ENCODE measurements at regions of chr1 and their contacts with region 1.

Region 1: DNA sequence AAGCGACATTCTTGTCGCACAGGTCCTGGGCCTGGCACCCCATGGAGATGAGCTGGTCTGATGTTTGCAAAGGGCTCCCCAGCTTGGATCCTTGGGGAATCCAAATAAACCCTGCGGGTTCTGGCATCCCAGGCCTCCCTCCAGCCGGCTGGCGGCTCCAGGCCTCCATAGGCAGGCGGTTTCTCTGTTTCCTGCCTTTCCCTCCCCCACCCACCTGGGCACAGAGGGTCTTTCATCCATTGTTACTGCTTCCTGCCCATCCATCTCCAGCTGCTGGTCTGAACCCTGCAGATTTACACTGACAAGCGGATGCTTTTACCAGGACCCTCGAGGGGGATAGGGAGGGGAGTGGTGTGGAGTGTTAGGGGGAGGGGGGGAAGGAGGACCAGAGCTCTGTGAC is 39.1 kb upstream of the ID3 start:
- DNase-seq: no peak
- ATAC-seq: no peak
- H3K4me3 ChIP-seq: peak overlapping the region in 1 of 2 experiments; percentile 1
- H3K4me3 Mint-ChIP-seq: no peak overlapping the region
- H3K27ac ChIP-seq: peak overlapping the region in 1 of 2 experiments; percentile 53
- H3K27ac Mint-ChIP-seq: no peak overlapping the region
- H3K4me1 ChIP-seq: peaks cover 94% of the 10 kb centered on the region
- H3K4me1 Mint-ChIP-seq: peaks cover 93% of the 10 kb centered on the region
- H3K27me3 ChIP-seq: no peaks in the 10 kb centered on the region
- H3K27me3 Mint-ChIP-seq: no peaks in the 10 kb centered on the region
- CTCF ChIP-seq: no peak

Region 2: GRCh38 chr1:23577056-23578004 is 21.1 kb before region 1 on chr1:
- CTCF ChIA-PET with region 1: interaction called, 7 read pairs
- POLR2A ChIA-PET with region 1: interaction called, 20 read pairs
- intact Hi-C with region 1: loop called in 1 of 2 experiments (anchors 2 kb)
- DNase-seq: no peak
- ATAC-seq: peak; percentile 74
- H3K4me3 ChIP-seq: no peak overlapping the region
- H3K4me3 Mint-ChIP-seq: peak overlapping the region; percentile 50
- H3K27ac ChIP-seq: peak overlapping the region; percentile 7 to 10
- H3K27ac Mint-ChIP-seq: peak overlapping the region; percentile 87
- H3K4me1 ChIP-seq: peaks cover 60% of the 10 kb centered on the region
- H3K4me1 Mint-ChIP-seq: peaks cover 62% of the 10 kb centered on the region
- H3K27me3 ChIP-seq: no peaks in the 10 kb centered on the region
- H3K27me3 Mint-ChIP-seq: no peaks in the 10 kb centered on the region
- CTCF ChIP-seq: no peak

Region 3: DNA sequence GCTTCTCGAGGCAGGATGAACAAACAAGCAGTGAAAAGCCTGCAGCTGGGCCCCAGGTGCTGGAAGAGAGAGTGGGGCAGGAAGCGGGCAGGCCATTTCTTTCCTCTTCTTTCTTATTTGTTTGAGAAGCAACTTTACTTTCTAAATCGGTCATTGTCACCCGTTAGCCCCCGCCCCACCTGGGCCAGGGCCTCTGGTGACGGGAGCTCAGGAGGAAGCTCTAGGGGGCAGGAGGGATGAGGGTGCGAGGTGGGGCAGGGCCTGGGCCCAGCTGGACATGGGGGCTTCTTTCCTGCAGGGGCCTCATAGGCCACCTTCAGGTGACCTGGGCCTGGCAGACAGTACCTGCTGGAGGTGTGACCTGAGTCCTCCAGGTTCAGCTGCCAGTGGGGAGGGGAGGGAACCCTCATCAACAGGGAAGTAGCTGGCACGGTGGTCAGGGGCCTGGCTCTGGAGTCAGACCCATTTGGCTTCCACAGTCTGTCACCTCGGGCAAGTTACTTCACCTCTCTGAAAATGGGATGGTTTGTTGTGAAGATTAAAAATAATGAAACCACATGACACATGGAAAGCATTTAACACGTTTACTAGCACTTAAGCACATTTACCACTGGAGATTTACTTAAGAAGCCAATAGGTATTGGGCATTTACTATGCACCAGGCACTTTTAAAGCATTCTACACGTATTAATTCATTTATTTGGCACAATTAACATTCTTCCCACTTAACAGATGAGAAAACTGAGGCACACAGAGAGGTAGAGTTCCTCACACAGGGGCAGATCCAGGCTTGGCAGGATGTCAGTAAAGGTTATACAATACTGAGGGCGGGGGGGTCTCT is 15.0 kb after region 1 on chr1:
- CTCF ChIA-PET with region 1: interaction called, 17 read pairs
- POLR2A ChIA-PET with region 1: interaction called, 86 read pairs
- intact Hi-C with region 1: loop called (anchors 1 to 2 kb)
- DNase-seq: peak in 7 of 9 experiments; percentile 33 to 78 (median 61)
- ATAC-seq: peak; percentile 61
- H3K4me3 ChIP-seq: peak overlapping the region in 1 of 2 experiments; percentile 8
- H3K4me3 Mint-ChIP-seq: peak overlapping the region; percentile 54
- H3K27ac ChIP-seq: peak overlapping the region; percentile 40 to 72
- H3K27ac Mint-ChIP-seq: peak overlapping the region; percentile 90
- H3K4me1 ChIP-seq: peaks cover 65% of the 10 kb centered on the region
- H3K4me1 Mint-ChIP-seq: peaks cover 83% of the 10 kb centered on the region
- H3K27me3 ChIP-seq: no peaks in the 10 kb centered on the region
- H3K27me3 Mint-ChIP-seq: no peaks in the 10 kb centered on the region
- CTCF ChIP-seq: no peak

Region 4: GRCh38 chr1:23619299-23620188 is 21.1 kb after region 1 on chr1:
- CTCF ChIA-PET with region 1: interaction called, 5 read pairs
- POLR2A ChIA-PET with region 1: interaction called, 86 read pairs
- intact Hi-C with region 1: loop called (anchors 2 kb)
- DNase-seq: peak; percentile 66 to 92 (median 85)
- ATAC-seq: peak; percentile 84
- H3K4me3 ChIP-seq: peak overlapping the region; percentile 44 to 50
- H3K4me3 Mint-ChIP-seq: peak overlapping the region; percentile 72
- H3K27ac ChIP-seq: peak overlapping the region; percentile 62 to 68
- H3K27ac Mint-ChIP-seq: peak overlapping the region; percentile 95
- H3K4me1 ChIP-seq: peaks cover 80% of the 10 kb centered on the region
- H3K4me1 Mint-ChIP-seq: peaks cover 89% of the 10 kb centered on the region
- H3K27me3 ChIP-seq: no peaks in the 10 kb centered on the region
- H3K27me3 Mint-ChIP-seq: no peaks in the 10 kb centered on the region
- CTCF ChIP-seq: no peak

Region 5: DNA sequence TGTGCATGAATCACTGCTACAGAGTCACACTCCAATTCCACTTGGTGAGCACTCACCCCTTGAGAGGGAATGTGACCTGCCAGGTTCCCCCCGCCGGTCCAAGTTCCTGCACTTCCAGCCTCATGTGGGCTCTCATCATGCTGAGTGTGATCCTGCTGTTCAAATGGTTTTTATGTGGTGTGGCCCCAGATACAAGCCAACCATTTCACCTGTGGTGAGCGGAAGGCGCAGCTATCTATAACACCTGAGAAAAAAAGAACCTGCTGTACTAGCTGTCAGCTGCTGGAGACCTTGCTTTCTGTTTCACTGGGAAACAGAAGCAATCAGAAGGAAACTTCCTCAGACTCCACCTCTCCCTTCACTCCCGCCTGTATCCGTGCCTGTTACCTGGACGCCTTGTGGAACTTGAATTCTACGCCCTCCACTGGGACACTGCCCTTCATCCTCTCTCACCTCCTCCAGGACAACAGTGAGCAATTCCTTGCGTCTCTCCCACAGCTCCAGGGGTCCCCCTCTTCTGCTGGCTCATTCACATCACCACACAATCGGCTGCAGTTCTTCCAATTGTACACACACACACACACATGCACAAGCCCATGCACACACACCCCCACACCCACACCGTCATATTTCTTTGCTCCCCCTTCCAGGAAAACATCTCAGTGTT is 28.8 kb after region 1 on chr1:
- CTCF ChIA-PET with region 1: interaction called, 207 read pairs
- POLR2A ChIA-PET with region 1: interaction called, 86 read pairs
- intact Hi-C with region 1: no loop called
- DNase-seq: peak in 5 of 9 experiments; percentile 29 to 63 (median 40)
- ATAC-seq: peak; percentile 69
- H3K4me3 ChIP-seq: peak overlapping the region; percentile 21 to 58
- H3K4me3 Mint-ChIP-seq: peak overlapping the region; percentile 84
- H3K27ac ChIP-seq: peak overlapping the region in 1 of 2 experiments; percentile 53
- H3K27ac Mint-ChIP-seq: peak overlapping the region; percentile 91
- H3K4me1 ChIP-seq: peaks cover 56% of the 10 kb centered on the region
- H3K4me1 Mint-ChIP-seq: peaks cover 64% of the 10 kb centered on the region
- H3K27me3 ChIP-seq: no peaks in the 10 kb centered on the region
- H3K27me3 Mint-ChIP-seq: no peaks in the 10 kb centered on the region
- CTCF ChIP-seq: no peak

Measured in CD8-positive, alpha-beta T cell (primary cell).